ENCODE measurements at regions of chr10 and their contacts with region 1.

Region 1: DNA sequence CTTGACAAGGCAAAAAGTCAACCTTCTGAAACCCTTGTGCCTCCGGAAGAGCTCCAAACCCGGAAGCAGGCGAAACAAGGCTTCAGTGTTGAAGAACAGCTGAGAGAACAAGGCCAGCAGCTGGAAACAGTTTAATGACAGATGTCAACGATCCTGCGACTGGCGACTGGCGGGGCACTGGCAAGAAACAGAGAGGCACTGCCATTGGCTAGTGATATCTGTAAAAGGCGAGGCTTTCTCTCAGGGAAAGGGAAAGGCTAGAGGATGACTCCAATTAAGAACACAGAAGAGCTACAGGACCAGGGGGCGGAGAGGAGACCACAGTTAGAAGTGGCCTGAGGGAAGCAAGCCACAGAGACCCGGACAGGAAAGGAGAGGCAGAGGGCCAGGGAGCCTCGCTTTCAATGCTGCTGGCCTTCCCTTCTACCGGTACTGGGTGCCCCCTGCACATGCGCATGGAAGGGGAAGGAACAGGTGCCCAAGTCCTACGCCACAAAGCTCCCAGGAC is 19.4 kb downstream of the ITGB1 start:
- DNase-seq: no peak
- ATAC-seq: no peak
- H3K4me3 Mint-ChIP-seq: peak overlapping the region; percentile 26
- H3K27ac Mint-ChIP-seq: peak overlapping the region; percentile 65
- H3K4me1 Mint-ChIP-seq: peaks cover 58% of the 10 kb centered on the region
- H3K27me3 Mint-ChIP-seq: no peaks in the 10 kb centered on the region
- CTCF ChIP-seq: no peak

Region 2: DNA sequence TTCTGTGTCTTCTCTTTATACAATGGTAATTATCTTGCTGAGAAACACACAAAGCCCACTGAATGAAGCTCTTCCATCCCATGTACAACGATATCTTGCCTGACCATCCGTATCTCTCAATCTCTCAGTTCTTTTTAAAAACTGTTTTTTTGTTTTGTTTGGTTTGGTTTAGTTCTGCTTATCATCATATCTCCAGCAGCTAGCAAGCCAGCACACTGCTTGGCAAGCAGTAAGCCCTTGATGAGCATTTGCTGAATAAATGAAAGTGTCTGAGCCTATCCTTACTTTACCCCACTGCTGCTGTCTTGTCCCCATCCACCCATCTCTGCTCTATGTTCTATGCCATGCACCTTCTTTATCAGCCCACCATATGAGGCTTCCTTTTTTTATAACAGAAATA is 14.8 kb before region 1 on chr10:
- CTCF ChIA-PET with region 1: no interaction called
- POLR2A ChIA-PET with region 1: interaction called, 3 read pairs
- intact Hi-C with region 1: loop called (anchors 2 kb)
- DNase-seq: no peak
- ATAC-seq: no peak
- H3K4me3 Mint-ChIP-seq: no peak overlapping the region
- H3K27ac Mint-ChIP-seq: no peak overlapping the region
- H3K4me1 Mint-ChIP-seq: no peaks in the 10 kb centered on the region
- H3K27me3 Mint-ChIP-seq: no peaks in the 10 kb centered on the region
- CTCF ChIP-seq: no peak

Region 3: GRCh38 chr10:32971536-32972091 is 33.0 kb after region 1 on chr10:
- CTCF ChIA-PET with region 1: no interaction called
- POLR2A ChIA-PET with region 1: no interaction called
- intact Hi-C with region 1: loop called (anchors 5 kb)
- DNase-seq: no peak
- ATAC-seq: peak; percentile 65
- H3K4me3 Mint-ChIP-seq: peak overlapping the region; percentile 72
- H3K27ac Mint-ChIP-seq: peak overlapping the region; percentile 87
- H3K4me1 Mint-ChIP-seq: peaks cover 36% of the 10 kb centered on the region
- H3K27me3 Mint-ChIP-seq: no peaks in the 10 kb centered on the region
- CTCF ChIP-seq: no peak

Measured in activated B cell treated with CpG ODN at 0.5 μM for 24 hours (primary cell).